Activated CD4-positive, alpha-beta T cell treated with anti-CD3 and anti-CD28 coated beads, Interleukin-2, amount 10 ng/mL, durations not matched to agents 24 days and 14 days (primary cell): ENCODE measurements at regions of chr11 and their contacts with region 1.

Region 1: GRCh38 chr11:124758317-124759203 is 3.5 kb downstream of the ESAM start:
- DNase-seq: peak; percentile 92
- H3K4me3 Mint-ChIP-seq: peak overlapping the region; percentile 80
- H3K27ac Mint-ChIP-seq: no peak overlapping the region
- H3K4me1 Mint-ChIP-seq: peaks cover 12% of the 10 kb centered on the region
- H3K27me3 Mint-ChIP-seq: peaks cover 45% of the 10 kb centered on the region

Region 2: GRCh38 chr11:124746621-124747243 is 11.8 kb before region 1 on chr11:
- intact Hi-C with region 1: loop called (anchors 1 kb)
- DNase-seq: peak; percentile 92
- H3K4me3 Mint-ChIP-seq: peak overlapping the region; percentile 98
- H3K27ac Mint-ChIP-seq: peak overlapping the region; percentile 95
- H3K4me1 Mint-ChIP-seq: peaks cover 34% of the 10 kb centered on the region
- H3K27me3 Mint-ChIP-seq: peaks cover 22% of the 10 kb centered on the region

Region 3: DNA sequence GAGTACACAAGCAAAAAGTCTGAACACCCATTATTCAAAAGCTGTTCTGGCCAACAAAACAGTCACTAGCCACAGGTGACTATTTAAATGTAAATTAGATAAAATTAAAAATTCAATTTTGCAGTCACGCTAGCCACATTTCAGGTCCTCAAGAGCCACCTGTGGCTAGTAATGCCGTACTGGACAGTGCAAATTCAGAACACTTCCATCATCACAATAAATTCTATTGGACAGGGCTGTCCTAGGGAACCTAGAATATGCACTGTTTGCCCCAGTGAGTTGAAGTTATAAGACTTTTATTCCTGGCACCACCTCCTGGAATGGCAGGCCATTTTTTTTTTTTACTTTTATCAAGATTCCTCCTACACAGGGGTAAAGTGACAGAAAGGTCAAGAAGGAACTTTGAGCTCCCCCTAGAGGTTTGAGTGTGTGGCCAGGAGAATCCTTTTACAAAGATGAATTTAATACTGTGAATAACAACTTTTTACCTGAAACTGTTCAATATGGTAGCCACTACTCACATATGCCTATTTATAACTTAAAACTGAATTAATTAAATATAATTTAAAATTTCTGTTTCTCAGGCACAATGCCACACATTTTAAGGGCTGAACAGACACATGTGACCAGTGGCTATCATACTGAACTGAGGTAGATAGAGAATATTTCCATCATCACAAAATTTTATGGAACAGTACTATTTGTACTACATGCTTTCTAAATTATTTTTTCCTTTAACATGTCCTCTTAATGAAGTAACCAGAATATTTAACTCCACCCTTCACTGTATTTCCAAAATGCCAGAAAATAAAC is 35.1 kb after region 1 on chr11:
- intact Hi-C with region 1: loop called (anchors 1 kb)
- DNase-seq: peak; percentile 78
- H3K4me3 Mint-ChIP-seq: no peak overlapping the region
- H3K27ac Mint-ChIP-seq: no peak overlapping the region
- H3K4me1 Mint-ChIP-seq: peaks cover 29% of the 10 kb centered on the region
- H3K27me3 Mint-ChIP-seq: no peaks in the 10 kb centered on the region

Region 4: DNA sequence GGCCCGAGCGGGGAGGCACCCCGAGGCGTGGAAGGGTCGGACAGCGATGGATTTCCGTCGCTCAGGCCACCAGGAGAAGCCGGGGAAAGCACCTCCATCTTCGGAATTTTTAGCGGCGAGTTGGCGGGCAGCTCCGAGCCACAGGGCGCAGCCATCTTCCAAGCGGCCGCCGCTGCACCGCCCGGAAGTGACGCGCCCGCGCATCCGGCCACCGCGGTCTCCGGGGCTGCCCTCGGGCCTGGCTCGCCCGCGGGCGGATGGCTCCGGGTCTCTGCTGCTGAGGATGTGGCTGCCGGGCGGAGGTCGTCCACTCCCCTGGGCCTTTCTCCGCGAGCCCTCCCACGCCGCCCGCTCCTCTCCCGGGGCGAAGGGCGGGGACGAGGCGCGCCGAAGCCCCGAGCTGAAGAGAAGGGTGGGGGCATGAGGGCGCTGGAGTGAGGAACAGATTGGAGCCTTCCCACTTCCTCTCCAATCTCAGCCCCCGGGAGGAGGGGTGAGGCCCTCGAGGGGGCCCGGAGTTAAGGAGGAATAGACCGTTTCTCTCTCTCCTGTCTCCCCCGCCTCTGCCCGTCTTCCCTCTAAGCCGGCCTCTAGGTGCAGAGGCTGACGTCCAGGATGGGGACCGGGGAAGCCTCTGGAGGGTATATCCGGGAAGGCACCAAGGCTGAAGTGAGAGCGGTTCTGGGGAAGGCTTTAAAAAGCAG is 41.8 kb after region 1 on chr11 and contains the start of gene MSANTD2:
- intact Hi-C with region 1: loop called (anchors 1 kb)
- DNase-seq: peak; percentile 96
- H3K4me3 Mint-ChIP-seq: peak within 1 kb of the TSS; percentile 95
- H3K27ac Mint-ChIP-seq: peak within 1 kb of the TSS; percentile 90
- H3K4me1 Mint-ChIP-seq: peaks cover 21% of the 10 kb centered on the region
- H3K27me3 Mint-ChIP-seq: peaks cover 16% of the 10 kb centered on the region
- total RNA-seq, gene MSANTD2: 10.6 TPM in 2 replicates

Region 5: DNA sequence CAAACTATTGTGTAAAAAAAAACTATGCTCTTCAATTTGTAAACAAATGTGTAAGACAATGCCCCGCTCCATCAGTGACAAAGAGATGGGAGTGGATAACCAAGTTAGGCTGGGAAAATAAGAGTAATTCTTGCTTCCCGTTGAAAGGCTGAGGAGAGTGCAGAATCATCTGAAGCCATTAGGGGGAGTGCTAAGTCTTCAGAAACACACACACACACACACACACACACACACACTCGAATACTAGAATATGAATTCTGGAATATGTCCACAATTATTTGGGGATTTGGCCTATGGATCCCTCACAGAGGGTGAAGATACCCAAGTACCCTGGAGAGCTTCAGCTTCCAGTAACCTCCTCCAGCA is 78.9 kb after region 1 on chr11:
- intact Hi-C with region 1: loop called (anchors 1 kb)
- DNase-seq: peak; percentile 64
- H3K4me3 Mint-ChIP-seq: no peak overlapping the region
- H3K27ac Mint-ChIP-seq: no peak overlapping the region
- H3K4me1 Mint-ChIP-seq: peaks cover 13% of the 10 kb centered on the region
- H3K27me3 Mint-ChIP-seq: peaks cover 74% of the 10 kb centered on the region

Region 6: DNA sequence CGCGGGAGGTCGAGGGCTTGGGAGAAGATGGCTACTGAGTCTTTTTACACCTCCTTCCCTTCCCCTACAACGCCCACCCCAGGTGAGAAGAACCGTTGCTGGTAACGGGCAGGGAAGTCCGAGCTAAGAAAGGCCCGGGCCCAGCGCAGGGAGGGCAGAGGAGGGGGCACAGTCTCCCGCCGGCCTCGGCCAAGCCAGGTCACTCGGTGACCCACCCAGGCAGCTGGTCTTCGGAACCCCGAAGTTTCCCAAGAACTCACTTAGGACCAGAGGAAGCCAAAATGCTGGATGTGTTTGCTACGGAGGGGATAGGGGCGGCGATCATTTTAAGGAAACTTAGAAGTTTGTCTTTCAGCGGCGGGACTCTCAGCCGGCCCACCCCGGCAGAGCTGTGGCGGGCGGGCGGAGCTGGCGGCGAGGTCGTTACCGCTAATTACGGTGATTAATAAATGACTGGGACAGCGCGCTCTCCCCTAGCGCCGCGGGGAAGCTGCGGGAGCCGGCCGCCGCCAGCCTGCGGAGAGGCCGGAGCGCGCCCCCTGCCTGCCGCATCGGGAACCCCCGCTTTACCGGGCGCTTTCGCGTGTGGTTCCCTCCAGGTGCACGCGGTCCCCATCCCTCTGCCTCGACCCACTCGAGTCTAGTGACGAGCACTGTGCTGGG is 107.5 kb after region 1 on chr11:
- intact Hi-C with region 1: loop called (anchors 2 kb)
- DNase-seq: peak; percentile 86
- H3K4me3 Mint-ChIP-seq: peak overlapping the region; percentile 11
- H3K27ac Mint-ChIP-seq: peak overlapping the region; percentile 23
- H3K4me1 Mint-ChIP-seq: peaks cover 8% of the 10 kb centered on the region
- H3K27me3 Mint-ChIP-seq: peaks cover 92% of the 10 kb centered on the region

Region 7: DNA sequence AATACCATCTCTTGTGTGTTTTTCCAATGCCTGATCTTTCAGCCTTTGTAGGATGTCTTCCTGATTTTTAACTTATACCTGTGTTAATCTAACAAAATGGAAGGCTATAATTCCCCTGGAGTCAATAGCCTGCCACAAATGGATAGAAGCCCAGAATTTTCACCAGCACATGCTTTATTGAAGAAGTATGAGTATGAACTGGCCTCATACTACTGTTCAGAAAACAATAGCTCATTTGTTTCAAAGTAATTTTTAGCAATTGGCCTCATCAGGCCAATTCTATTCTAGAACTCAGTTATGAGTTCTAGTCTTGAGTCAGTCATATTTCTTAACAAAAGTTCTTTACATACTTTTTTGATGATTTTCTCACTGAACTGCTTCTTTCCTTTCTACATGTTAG is 264.0 kb after region 1 on chr11:
- intact Hi-C with region 1: no loop called
- DNase-seq: no peak
- H3K4me3 Mint-ChIP-seq: no peak overlapping the region
- H3K27ac Mint-ChIP-seq: no peak overlapping the region
- H3K4me1 Mint-ChIP-seq: no peaks in the 10 kb centered on the region
- H3K27me3 Mint-ChIP-seq: no peaks in the 10 kb centered on the region

Region 8: GRCh38 chr11:125164422-125165110 is 406.0 kb after region 1 on chr11 and contains the start of gene PKNOX2:
- intact Hi-C with region 1: loop called (anchors 10 kb)
- DNase-seq: peak; percentile 87
- H3K4me3 Mint-ChIP-seq: peak within 1 kb of the TSS; percentile 94
- H3K27ac Mint-ChIP-seq: peak within 1 kb of the TSS; percentile 62
- H3K4me1 Mint-ChIP-seq: peaks cover 19% of the 10 kb centered on the region
- H3K27me3 Mint-ChIP-seq: peaks cover 74% of the 10 kb centered on the region
- total RNA-seq, gene PKNOX2: not detected in 2 replicates